ENCODE measurements at regions of chr22 and their contacts with region 1.

Region 1: GRCh38 chr22:37043828-37044538 is 7.6 kb upstream of the KCTD17 start:
- DNase-seq: peak; percentile 50 to 63
- ATAC-seq: peak; percentile 80 to 90 (median 87)
- H3K4me3 ChIP-seq: no peak overlapping the region
- H3K27ac ChIP-seq: no peak overlapping the region
- H3K4me1 ChIP-seq: peaks cover 0 to 8% (median 0%) of the 10 kb centered on the region in 9 donors
- H3K27me3 ChIP-seq: peaks cover 0 to 22% (median under 1%) of the 10 kb centered on the region in 7 donors
- CTCF ChIP-seq: peak; percentile 40 to 73 (median 65)

Region 2: DNA sequence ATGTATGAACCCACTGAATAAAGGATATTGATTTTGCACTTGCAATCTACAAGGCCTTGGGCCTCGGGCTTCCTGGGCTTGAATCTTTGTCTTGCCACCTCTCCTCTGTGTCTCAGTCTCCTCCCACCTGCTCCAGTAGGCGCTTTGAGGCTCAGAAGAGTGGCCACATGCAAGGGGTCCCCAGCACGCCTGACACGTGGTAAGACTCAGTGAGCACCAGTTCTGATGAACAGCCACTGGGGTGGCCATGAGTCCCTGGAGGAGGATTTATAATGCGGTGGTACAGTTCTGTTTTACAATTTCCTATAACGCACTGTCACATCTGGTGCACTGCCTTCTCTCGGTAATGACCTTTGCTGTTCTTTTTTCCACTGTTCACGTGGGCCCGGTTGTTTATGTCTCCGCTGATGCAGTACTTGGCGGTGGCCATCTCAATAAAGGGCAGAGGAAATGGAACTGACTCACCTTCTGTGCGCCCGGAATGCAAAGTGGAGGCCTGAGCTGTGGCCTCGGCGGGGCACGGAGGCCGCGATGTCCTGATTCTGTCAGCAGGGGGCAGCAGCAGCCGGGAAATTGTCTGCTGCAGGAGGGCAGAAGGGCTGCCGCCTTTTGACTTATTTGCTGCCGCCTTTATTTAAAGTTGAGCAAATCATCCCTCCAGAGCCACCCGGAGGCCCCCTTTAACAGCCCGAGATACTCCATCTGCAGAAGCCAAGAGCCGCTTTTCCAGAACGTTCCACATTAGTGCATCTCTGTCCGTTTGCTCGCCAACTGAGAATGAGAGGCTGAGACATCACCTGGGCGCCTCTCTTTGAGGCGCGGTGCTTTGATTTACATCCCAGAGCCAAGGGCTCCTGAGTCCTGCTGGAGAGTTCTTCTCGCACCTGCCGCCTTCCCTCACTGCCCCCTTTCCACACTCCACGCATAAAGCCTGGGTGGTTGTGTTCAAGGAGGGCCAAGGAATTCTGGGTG is 262.0 kb before region 1 on chr22:
- intact Hi-C with region 1: loop called in 2 of 10 experiments (anchors 10 kb)
- DNase-seq: peak; percentile 69 to 80
- ATAC-seq: peak; percentile 73 to 92 (median 90)
- H3K4me3 ChIP-seq: no peak overlapping the region
- H3K27ac ChIP-seq: peak overlapping the region in 1 of 10 donors; percentile 23
- H3K4me1 ChIP-seq: peaks cover 0 to 9% (median 4%) of the 10 kb centered on the region in 9 donors
- H3K27me3 ChIP-seq: peaks cover 0 to 40% (median 32%) of the 10 kb centered on the region in 7 donors
- CTCF ChIP-seq: peak; percentile 84 to 95 (median 90)

Region 3: GRCh38 chr22:36873680-36874537 is 170.1 kb before region 1 on chr22:
- intact Hi-C with region 1: loop called in 6 of 10 experiments (anchors 5 to 10 kb)
- DNase-seq: peak in 1 of 2 donors; percentile 43
- ATAC-seq: peak; percentile 71 to 90 (median 85)
- H3K4me3 ChIP-seq: no peak overlapping the region
- H3K27ac ChIP-seq: peak overlapping the region in 9 of 10 donors; percentile 3 to 87 (median 35)
- H3K4me1 ChIP-seq: peaks cover 0 to 28% (median 16%) of the 10 kb centered on the region in 9 donors
- H3K27me3 ChIP-seq: peaks cover 0 to 41% (median 27%) of the 10 kb centered on the region in 7 donors
- CTCF ChIP-seq: peak in 8 of 9 donors; percentile 23 to 63 (median 50)

Region 4: DNA sequence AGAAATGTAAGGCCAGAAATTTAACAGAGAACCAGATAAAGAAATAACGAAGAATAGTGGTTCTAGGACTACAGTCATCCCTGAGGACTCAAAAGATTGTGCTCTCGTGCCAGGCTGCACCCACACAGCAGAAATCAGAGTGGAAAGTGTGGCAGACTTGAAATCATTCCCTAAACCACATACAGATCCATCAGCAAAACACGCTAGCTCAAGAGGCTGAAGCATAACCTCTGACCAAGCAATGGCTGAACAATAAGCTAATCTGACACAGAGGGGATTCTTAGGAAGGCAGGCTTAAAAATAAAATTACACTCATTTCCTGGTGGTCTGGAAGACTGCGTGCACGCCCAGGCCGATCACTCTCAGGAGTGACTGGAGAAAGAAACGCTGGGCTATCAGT is 164.2 kb before region 1 on chr22:
- intact Hi-C with region 1: loop called in 6 of 10 experiments (anchors 5 to 10 kb)
- DNase-seq: no peak
- ATAC-seq: no peak
- H3K4me3 ChIP-seq: no peak overlapping the region
- H3K27ac ChIP-seq: no peak overlapping the region
- H3K4me1 ChIP-seq: peaks cover 0 to 17% (median under 1%) of the 10 kb centered on the region in 9 donors
- H3K27me3 ChIP-seq: peaks cover 0 to 16% (median 7%) of the 10 kb centered on the region in 7 donors
- CTCF ChIP-seq: no peak

Region 5: GRCh38 chr22:36977947-36978660 is 65.9 kb before region 1 on chr22:
- intact Hi-C with region 1: loop called in 1 of 10 experiments (anchors 5 kb)
- DNase-seq: peak; percentile 90 to 91
- ATAC-seq: peak; percentile 94 to 98 (median 97)
- H3K4me3 ChIP-seq: peak overlapping the region in 9 of 10 donors; percentile 24 to 57 (median 52)
- H3K27ac ChIP-seq: peak overlapping the region in 2 of 10 donors; percentile 16 to 80
- H3K4me1 ChIP-seq: peaks cover 0 to 11% (median 5%) of the 10 kb centered on the region in 9 donors
- H3K27me3 ChIP-seq: peaks cover 0 to 26% (median 11%) of the 10 kb centered on the region in 7 donors
- CTCF ChIP-seq: peak; percentile 90 to 99 (median 96)

Measured in heart right ventricle (tissue), 16 donors.